ENCODE measurements at regions of chr12 and their contacts with region 1.

Region 1: GRCh38 chr12:53198486-53199110 is 8.5 kb downstream of the ITGB7 start:
- DNase-seq: no peak
- ATAC-seq: no peak

Region 2: GRCh38 chr12:53160000-53160399 is 38.6 kb before region 1 on chr12:
- intact Hi-C with region 1: loop called (anchors 5 kb)
- DNase-seq: no peak
- ATAC-seq: peak; percentile 16

Measured in sciatic nerve (tissue), 2 donors.